ENCODE measurements at regions of chr2 and their contacts with region 1.

Region 1: DNA sequence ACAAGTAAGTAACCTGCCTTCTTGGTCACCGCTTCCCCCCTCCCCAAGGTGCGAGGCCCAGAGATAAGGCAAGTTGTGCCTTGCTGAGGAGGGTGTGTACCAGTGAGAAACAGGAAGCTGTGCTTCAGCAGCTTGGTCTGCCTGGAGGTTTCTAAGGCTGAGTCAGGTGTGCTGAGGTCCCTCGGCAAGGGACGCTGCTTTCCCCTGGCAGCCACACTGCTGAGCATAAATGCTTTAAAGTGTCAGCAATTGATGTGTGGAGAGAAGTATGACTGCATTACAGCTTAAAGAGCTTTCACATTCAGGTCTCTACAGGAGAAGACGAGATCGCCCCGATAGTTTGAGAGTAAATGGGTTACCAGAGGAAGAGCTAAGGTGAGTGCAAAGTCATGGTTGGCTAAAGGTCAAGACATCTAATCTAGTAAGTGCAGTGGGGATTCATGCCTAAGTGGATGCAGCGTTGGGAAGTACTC is 86.9 kb downstream of the LIMS1 start:
- DNase-seq: peak; percentile 89
- H3K4me3 Mint-ChIP-seq: peak overlapping the region; percentile 85
- H3K27ac Mint-ChIP-seq: peak overlapping the region; percentile 97
- H3K4me1 Mint-ChIP-seq: peaks cover 81% of the 10 kb centered on the region
- H3K27me3 Mint-ChIP-seq: no peaks in the 10 kb centered on the region

Region 2: GRCh38 chr2:108363031-108363907 is 257.9 kb before region 1 on chr2:
- CTCF ChIA-PET with region 1: no interaction called
- POLR2A ChIA-PET with region 1: no interaction called
- intact Hi-C with region 1: no loop called
- DNase-seq: no peak
- H3K4me3 Mint-ChIP-seq: no peak overlapping the region
- H3K27ac Mint-ChIP-seq: no peak overlapping the region
- H3K4me1 Mint-ChIP-seq: no peaks in the 10 kb centered on the region
- H3K27me3 Mint-ChIP-seq: peaks cover 16% of the 10 kb centered on the region

Region 3: DNA sequence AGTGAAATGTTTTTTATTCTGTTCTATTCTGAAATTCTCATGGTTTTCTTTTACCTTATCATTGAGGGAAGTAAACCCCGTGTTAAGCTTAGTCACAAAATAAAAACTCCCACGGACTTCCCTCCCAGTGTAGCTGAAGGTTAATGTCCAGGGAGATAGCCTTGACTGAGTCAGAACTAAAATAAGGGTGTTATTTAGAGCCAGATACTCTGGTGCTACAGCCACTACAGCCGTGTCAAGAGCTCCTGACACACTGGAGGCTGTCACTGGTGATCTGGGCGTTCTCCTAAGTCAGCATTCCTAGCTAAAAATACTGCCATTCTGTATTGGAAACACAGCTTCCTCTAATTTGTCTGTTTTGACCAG is 16.2 kb after region 1 on chr2:
- CTCF ChIA-PET with region 1: interaction called, 237 read pairs
- POLR2A ChIA-PET with region 1: interaction called, 10 read pairs
- intact Hi-C with region 1: loop called (anchors 2 kb)
- DNase-seq: no peak
- H3K4me3 Mint-ChIP-seq: no peak overlapping the region
- H3K27ac Mint-ChIP-seq: peak overlapping the region; percentile 76
- H3K4me1 Mint-ChIP-seq: peaks cover 85% of the 10 kb centered on the region
- H3K27me3 Mint-ChIP-seq: no peaks in the 10 kb centered on the region

Region 4: DNA sequence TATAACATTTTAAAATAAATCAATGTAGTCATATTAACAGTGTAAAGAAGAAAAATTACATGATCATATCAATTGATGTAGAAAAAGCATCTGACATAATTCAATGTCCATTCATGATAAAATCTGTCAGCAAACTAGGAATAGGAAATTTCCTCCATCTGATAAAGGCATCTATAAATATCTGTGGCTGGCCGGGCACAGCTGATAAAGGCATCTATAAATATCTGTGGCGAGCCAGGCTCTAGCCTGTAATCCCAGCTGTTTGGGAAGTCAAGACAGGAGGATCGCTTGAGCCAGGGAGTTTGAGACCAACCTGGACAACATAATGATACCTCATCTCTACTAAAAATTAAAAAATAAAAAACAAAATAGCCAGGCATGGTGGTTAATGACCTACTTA is 80.1 kb after region 1 on chr2:
- CTCF ChIA-PET with region 1: no interaction called
- POLR2A ChIA-PET with region 1: no interaction called
- intact Hi-C with region 1: no loop called
- DNase-seq: no peak
- H3K4me3 Mint-ChIP-seq: no peak overlapping the region
- H3K27ac Mint-ChIP-seq: no peak overlapping the region
- H3K4me1 Mint-ChIP-seq: no peaks in the 10 kb centered on the region
- H3K27me3 Mint-ChIP-seq: no peaks in the 10 kb centered on the region

Region 5: DNA sequence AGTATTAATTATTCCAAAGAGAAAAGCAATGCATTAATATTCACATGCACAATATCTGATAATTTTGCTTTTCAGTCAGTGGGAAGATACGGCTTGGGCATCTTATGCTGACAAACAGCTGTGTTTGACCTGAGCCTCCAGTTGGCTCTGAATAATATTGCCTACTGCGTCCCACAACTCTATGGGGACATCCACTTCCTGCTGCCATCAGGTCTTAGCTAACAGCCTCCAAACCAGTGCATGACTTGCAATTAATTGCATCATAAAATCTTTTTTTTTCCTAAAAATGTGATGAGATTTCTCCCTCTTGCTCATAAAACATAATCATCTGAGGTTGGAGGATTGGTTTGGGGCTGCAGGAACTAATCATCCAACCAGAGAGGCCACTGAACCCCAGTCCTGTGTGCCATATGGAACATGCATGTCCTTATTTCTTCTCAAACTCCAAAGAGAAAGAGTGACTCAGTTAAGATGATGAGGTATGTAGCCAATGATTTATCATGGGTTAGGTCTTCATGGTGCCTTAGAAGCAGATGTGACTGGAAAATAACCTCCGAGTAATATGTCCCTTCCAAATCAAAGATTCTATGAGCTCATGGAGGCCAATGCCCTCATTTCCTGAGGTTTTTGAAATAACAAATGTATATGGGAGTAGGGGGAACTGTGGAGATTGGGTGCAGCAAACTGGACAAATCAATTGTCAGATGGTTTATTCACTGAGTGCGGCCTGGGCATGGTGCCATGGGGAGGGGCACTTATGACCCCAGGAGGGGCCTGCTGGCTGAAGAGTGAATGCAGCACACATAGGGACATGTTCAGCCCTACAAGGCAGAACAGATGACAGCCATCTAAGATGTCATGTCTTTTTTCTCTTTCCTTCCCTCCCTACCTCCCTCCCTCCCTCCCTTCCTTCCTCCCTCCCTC is 328.5 kb after region 1 on chr2:
- CTCF ChIA-PET with region 1: no interaction called
- POLR2A ChIA-PET with region 1: no interaction called
- intact Hi-C with region 1: no loop called
- DNase-seq: no peak
- H3K4me3 Mint-ChIP-seq: no peak overlapping the region
- H3K27ac Mint-ChIP-seq: no peak overlapping the region
- H3K4me1 Mint-ChIP-seq: no peaks in the 10 kb centered on the region
- H3K27me3 Mint-ChIP-seq: no peaks in the 10 kb centered on the region